Panc1 (cell line): ENCODE measurements at regions of chr18 and their contacts with region 1.

Region 1: DNA sequence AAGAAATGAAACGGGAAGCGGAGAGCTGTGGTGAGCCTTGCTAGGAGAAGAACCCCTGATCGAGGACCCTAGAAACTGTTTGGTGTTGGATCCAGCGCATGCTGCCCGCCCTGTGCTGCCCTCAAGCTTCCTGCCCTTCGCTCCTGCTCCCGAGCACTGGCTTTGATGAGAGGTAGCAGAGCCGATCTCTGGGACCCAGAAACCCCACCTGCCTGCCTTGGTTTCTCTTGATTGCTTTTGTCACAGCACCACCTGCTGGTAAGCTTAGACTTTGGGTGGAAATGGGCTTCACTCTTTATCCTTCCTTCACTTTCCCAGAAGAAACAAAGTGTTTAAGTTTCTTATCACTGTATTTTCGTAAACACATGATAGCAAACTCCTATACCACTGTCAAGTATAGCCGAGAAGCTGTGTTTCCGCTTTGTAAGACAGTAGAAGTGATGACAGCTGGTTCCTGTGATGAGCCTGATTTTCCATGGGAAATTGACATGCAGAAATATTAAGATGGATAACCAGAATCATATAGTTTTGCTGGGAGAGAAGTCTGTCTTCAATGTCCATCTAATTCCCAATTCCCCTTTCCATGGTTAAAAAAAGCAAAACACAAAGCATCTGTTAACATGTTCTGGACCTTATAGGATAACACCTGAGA is 267.4 kb downstream of the PHLPP1 start:
- DNase-seq: peak; percentile 35
- ATAC-seq: peak; percentile 66
- H3K4me3 ChIP-seq: no peak overlapping the region
- H3K27ac ChIP-seq: no peak overlapping the region
- H3K4me1 ChIP-seq: no peaks in the 10 kb centered on the region
- H3K27me3 ChIP-seq: no peaks in the 10 kb centered on the region
- CTCF ChIP-seq: peak; percentile 65

Region 2: DNA sequence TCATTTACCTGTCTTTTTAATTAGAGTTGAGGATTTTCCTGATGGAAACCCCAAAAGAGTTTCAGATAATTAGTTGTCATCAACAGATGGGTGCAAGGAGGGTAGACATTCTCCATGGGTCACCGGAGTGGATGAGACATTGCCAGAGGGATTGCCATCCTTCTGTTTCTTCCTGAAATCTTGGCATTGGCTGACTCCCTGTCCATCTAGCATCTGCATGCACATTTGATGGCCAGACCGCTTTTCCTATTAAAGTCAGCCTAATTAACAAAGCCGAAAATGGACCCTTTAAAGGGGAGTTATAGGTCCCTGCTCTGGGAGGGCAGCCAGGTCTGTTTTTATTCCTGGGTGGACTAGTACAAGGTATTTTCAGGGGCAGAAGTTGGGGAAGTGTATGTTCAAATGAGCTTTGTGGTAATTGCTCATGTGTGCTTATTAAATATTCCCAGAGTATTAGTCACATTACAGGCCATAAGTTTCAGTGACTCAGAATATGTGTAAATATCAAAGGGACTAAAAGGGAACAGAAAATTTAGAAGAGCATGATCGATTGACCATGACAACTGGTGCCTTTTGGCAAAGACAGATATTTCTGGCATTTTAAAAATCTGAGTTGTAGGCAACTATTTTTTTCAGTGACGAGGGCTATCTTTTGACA is 57.6 kb before region 1 on chr18:
- CTCF ChIA-PET with region 1: no interaction called
- POLR2A ChIA-PET with region 1: no interaction called
- in situ Hi-C with region 1: no loop called
- intact Hi-C with region 1: no loop called
- DNase-seq: no peak
- ATAC-seq: no peak
- H3K4me3 ChIP-seq: no peak overlapping the region
- H3K27ac ChIP-seq: no peak overlapping the region
- H3K4me1 ChIP-seq: no peaks in the 10 kb centered on the region
- H3K27me3 ChIP-seq: no peaks in the 10 kb centered on the region
- CTCF ChIP-seq: no peak

Region 3: GRCh38 chr18:63004466-63005089 is 21.9 kb after region 1 on chr18:
- CTCF ChIA-PET with region 1: no interaction called
- POLR2A ChIA-PET with region 1: interaction called, 12 read pairs
- in situ Hi-C with region 1: no loop called
- intact Hi-C with region 1: no loop called
- DNase-seq: no peak
- ATAC-seq: no peak
- H3K4me3 ChIP-seq: no peak overlapping the region
- H3K27ac ChIP-seq: no peak overlapping the region
- H3K4me1 ChIP-seq: no peaks in the 10 kb centered on the region
- H3K27me3 ChIP-seq: no peaks in the 10 kb centered on the region
- CTCF ChIP-seq: no peak